ENCODE measurements at regions of chr17 and their contacts with region 1.

Region 1: DNA sequence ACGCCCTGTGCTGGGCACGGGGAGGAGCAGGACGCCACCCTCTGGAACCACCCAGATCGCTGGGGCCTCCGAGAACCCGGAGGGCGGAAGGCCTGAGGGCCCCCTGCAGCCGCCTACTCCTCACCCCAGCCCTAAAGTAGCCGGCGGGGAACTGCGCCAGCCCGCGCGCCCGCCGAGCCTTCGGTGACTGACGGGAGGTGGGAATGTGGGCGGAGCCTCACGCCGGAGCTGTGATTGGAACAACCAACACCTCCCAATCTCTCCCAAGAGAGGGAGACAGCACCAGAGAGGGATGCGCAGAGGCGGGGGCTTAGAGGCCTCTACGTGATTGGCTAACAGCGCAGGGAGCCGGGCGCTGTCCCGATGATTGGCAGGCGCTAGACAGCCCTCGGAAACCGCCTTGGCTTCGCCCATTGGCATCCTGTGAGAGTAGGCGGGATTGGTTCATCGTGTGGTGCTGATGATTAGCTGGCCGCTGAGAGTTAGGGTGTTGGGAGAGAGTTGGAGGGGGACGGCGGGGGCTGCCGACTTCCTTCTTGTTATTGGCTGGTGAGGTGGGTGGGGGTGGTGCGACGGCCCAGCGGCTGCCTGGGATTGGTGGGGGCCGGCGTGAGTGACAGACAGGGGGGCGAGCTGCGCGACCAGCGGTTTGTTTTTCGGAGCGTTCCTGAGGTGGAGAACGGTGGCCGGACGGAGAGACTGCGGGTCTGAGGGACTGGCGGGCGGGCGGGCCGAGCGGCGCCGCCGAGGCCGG is at the start of gene MAP3K3:
- DNase-seq: peak; percentile 99
- ATAC-seq: peak; percentile 96
- H3K4me3 ChIP-seq: peak within 1 kb of the TSS; percentile 78
- H3K27ac ChIP-seq: peak within 1 kb of the TSS; percentile 82
- H3K4me1 ChIP-seq: peaks cover 33% of the 10 kb centered on the region
- H3K27me3 ChIP-seq: no peaks in the 10 kb centered on the region
- CTCF ChIP-seq: peak; percentile 43
- total RNA-seq, gene MAP3K3: 57.5 TPM

Region 2: GRCh38 chr17:63425482-63425881 is 196.5 kb before region 1 on chr17:
- intact Hi-C with region 1: loop called (anchors 5 kb)
- DNase-seq: peak; percentile 70
- ATAC-seq: peak; percentile 93
- H3K4me3 ChIP-seq: no peak overlapping the region
- H3K27ac ChIP-seq: no peak overlapping the region
- H3K4me1 ChIP-seq: peaks cover 13% of the 10 kb centered on the region
- H3K27me3 ChIP-seq: no peaks in the 10 kb centered on the region
- CTCF ChIP-seq: peak; percentile 95